ENCODE measurements at regions of chr7 and their contacts with region 1.

Region 1: GRCh38 chr7:98203964-98204605 is 7.2 kb upstream of the BHLHA15 start:
- DNase-seq: no peak
- H3K4me3 ChIP-seq: no peak overlapping the region
- H3K27ac ChIP-seq: no peak overlapping the region
- H3K27me3 ChIP-seq: no peaks in the 10 kb centered on the region
- CTCF ChIP-seq: no peak

Region 2: GRCh38 chr7:98215561-98216495 is 11.7 kb after region 1 on chr7:
- CTCF ChIA-PET with region 1: no interaction called
- POLR2A ChIA-PET with region 1: interaction called, 10 read pairs
- DNase-seq: no peak
- H3K4me3 ChIP-seq: no peak overlapping the region
- H3K27ac ChIP-seq: no peak overlapping the region
- H3K27me3 ChIP-seq: no peaks in the 10 kb centered on the region
- CTCF ChIP-seq: no peak

Measured in AG04450 (cell line).